Aorta (tissue), 5 donors: ENCODE measurements at regions of chr20 and their contacts with region 1.

Region 1: GRCh38 chr20:23420943-23421931 is at the start of gene NAPB:
- DNase-seq: peak; percentile 97 to 99
- ATAC-seq: peak; percentile 99
- H3K4me3 ChIP-seq: peak within 1 kb of the TSS; percentile 81 to 83
- H3K27ac ChIP-seq: peak within 1 kb of the TSS; percentile 18 to 61
- H3K4me1 ChIP-seq: peaks cover 0 to 3% of the 10 kb centered on the region in 2 donors
- H3K27me3 ChIP-seq: no peaks in the 10 kb centered on the region
- total RNA-seq, gene NAPB: 10.6 to 15.2 TPM

Region 2: GRCh38 chr20:22890594-22891300 is 530.5 kb before region 1 on chr20:
- intact Hi-C with region 1: no loop called
- DNase-seq: no peak
- ATAC-seq: no peak
- H3K4me3 ChIP-seq: no peak overlapping the region
- H3K27ac ChIP-seq: no peak overlapping the region
- H3K4me1 ChIP-seq: no peaks in the 10 kb centered on the region
- H3K27me3 ChIP-seq: peaks cover 0 to 2% of the 10 kb centered on the region in 2 donors

Region 3: DNA sequence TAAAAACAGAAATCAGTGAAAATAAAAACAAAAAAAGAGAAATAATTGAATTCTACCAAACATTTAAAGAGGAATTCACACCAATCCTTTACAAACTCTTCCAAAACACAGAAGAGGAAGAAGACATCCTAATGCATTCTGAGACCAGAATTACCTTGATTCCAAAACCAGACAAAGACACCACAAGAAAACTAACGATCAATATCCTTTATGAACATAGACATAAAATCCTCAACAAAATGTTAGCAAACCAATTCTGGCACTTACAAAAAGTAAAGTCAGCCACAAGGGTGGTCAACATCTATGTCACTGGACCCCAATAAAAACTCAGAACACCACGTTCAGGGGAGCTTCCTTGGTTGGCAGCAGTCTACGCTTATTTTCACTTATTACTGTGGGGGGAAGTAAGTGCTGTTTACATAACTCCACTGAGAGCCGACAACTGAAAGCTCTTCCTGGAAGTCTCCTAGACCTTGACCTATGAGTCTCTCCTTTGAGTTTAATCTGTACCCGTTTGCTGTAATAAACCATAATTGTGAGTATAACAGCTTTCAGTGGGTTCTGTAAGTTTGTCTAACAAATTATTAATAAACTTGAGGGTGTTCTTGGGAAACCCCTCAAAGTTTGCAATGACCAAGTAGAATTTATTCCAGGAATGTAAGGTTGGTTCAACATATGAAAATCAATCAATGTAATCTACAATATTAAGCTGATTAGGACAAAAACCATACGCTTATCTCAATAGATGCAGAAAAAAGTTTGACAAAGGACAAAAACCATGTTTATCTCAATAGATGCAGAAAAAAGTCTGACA is 34.7 kb before region 1 on chr20:
- intact Hi-C with region 1: no loop called
- DNase-seq: no peak
- ATAC-seq: no peak
- H3K4me3 ChIP-seq: no peak overlapping the region
- H3K27ac ChIP-seq: no peak overlapping the region
- H3K4me1 ChIP-seq: no peaks in the 10 kb centered on the region
- H3K27me3 ChIP-seq: no peaks in the 10 kb centered on the region

Region 4: GRCh38 chr20:23622839-23623343 is 201.7 kb after region 1 on chr20:
- intact Hi-C with region 1: loop called in 1 of 2 experiments (anchors 10 kb)
- DNase-seq: peak; percentile 81 to 87
- ATAC-seq: peak; percentile 95
- H3K4me3 ChIP-seq: peak overlapping the region in 1 of 2 donors; percentile 52
- H3K27ac ChIP-seq: peak overlapping the region; percentile 80 to 95
- H3K4me1 ChIP-seq: no peaks in the 10 kb centered on the region
- H3K27me3 ChIP-seq: no peaks in the 10 kb centered on the region